ENCODE measurements at regions of chr11 and their contacts with region 1.

Region 1: DNA sequence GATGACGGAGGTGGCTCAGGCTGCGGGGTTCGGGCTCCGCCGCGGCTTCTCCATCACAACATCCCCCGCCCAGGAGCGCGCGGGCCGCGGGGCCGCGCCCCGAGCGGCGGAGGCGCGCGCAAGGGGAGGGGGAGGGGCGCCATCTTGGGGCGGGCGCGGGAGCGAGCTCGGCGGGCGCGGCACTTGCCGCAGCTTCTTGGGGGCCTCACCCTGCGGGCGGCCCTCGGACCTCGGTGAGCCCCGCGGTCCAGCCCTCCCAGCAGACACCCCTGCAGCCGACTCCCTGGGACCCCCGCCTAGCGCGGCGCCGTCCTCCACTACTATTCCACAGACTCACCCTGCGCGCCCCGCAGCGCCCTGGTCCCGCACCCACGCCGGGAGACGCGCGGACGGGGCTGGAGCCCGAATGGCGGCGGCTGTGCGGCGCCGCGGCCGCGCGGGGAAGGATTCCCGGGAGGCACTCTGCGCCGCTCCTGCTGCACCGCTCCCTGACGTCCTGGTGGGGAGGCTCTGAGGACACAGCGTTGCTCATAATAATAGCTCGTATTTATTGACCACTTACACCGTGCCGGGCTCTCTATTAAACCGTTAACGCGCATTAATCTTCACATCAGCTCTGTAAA is at the start of gene APBB1:
- DNase-seq: peak in 1 of 2 donors; percentile 83
- H3K4me3 ChIP-seq: peak within 1 kb of the TSS; percentile 91 to 99
- H3K27ac ChIP-seq: peak within 1 kb of the TSS; percentile 90 to 92
- H3K4me1 ChIP-seq: peaks cover 0 to 22% of the 10 kb centered on the region in 2 donors
- H3K27me3 ChIP-seq: no peaks in the 10 kb centered on the region
- CTCF ChIP-seq: peak in 1 of 3 experiments; percentile 16
- total RNA-seq, gene APBB1: 29.2 TPM

Region 2: GRCh38 chr11:5043380-5043779 is 1375.7 kb before region 1 on chr11:
- intact Hi-C with region 1: no loop called
- DNase-seq: no peak
- H3K4me3 ChIP-seq: no peak overlapping the region
- H3K27ac ChIP-seq: no peak overlapping the region
- H3K4me1 ChIP-seq: no peaks in the 10 kb centered on the region
- H3K27me3 ChIP-seq: no peaks in the 10 kb centered on the region
- CTCF ChIP-seq: no peak

Region 3: GRCh38 chr11:6362873-6363678 is 56.0 kb before region 1 on chr11:
- intact Hi-C with region 1: no loop called
- DNase-seq: peak; percentile 47 to 93
- H3K4me3 ChIP-seq: peak overlapping the region in 1 of 2 donors; percentile 7
- H3K27ac ChIP-seq: peak overlapping the region; percentile 88 to 92
- H3K4me1 ChIP-seq: peaks cover 9 to 18% of the 10 kb centered on the region in 2 donors
- H3K27me3 ChIP-seq: no peaks in the 10 kb centered on the region
- CTCF ChIP-seq: peak; percentile 80 to 93 (median 87)

Region 4: DNA sequence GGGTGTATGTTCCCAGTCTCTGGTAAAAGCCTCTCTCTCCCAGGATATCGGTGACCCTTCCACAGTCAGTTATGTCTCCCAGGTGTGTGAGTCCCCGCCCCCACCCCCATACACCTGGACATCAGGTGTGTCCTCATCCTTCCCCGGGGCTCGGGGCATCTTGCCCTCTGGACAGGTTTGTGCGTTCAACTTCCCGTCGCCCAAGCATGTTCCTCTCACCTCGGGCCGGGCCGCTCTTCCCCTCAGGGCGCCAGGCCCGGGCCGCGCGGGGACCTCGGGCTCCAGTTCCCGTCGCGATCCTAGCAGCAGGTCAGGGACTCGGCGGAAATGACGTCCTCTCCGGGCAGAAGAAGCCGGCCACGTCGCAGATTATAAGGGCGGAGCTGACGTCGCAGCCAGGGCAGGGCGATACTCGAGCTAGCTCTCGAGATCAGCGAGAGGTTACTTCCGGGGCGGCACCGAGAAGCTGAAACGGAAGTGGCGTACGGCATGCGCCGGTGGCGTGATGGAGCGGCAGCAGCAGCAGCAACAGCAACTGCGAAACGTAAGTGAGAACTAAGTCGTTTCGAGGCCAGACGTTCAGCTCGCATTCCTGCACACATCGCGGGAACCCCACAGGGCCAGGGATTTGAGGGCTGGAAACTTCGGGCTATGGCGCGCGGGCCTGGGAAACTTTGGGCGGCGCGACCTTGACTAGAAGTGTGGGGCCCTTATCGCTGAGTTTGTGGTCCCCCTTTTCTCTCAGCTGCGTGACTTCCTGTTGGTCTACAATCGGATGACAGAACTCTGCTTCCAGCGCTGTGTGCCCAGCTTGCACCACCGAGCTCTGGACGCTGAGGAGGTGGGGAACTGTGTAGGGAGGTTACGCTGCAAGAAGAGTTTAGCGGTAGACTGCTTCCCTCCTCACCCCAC is 62.1 kb after region 1 on chr11 and contains the starts of genes ARFIP2 and TIMM10B:
- intact Hi-C with region 1: loop called (anchors 2 kb)
- DNase-seq: peak; percentile 96 to 99
- H3K4me3 ChIP-seq: peak within 1 kb of the TSS; percentile 92 to 94
- H3K27ac ChIP-seq: peak within 1 kb of the TSS; percentile 95
- H3K4me1 ChIP-seq: peaks cover 7 to 27% of the 10 kb centered on the region in 2 donors
- H3K27me3 ChIP-seq: no peaks in the 10 kb centered on the region
- CTCF ChIP-seq: no peak
- total RNA-seq, gene ARFIP2: 87.8 TPM
- total RNA-seq, gene TIMM10B: 19.2 TPM

Region 5: DNA sequence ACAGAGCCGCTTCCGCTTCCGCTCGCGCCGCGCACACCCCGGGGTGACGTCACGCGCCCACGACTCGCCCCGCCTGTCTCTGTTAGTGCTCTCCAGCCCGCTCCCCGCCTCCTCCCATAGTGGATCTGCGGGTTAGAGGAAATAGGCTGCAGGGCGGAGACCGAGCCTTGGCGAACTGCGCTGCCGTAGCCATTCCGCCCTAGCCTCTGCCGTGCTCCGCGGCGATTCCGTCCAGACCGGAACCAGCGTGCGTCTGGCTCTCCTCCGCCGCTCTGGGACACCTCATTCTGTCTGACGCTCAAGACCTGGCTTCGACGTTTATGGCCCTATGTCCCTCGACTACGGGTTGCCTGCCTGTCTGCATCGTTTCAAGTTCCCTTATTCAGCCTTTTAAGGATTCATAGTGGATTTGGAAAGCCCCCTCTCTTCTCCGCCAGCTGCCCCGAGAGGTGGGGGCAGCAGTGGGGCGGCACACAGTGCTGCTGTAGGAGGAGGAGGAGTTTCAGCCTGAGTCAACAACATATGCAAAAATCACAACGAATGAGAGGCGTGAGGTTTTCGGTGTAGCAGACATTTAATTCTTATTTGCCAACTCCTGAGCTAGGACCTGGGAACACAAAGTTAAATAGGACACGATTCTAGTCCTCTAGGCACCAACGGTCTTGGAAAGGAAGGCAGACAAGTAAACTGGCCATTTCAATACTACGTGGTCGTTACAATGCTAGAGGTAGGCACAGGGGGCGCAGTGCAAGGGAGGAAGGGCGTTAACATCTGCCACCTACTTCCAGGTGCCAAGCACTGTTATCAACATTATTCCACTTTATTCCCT is 193.3 kb after region 1 on chr11 and contains the start of gene TAF10:
- intact Hi-C with region 1: no loop called
- DNase-seq: peak; percentile 95 to 99
- H3K4me3 ChIP-seq: peak within 1 kb of the TSS; percentile 76 to 95
- H3K27ac ChIP-seq: peak within 1 kb of the TSS; percentile 95 to 97
- H3K4me1 ChIP-seq: peaks cover 18 to 37% of the 10 kb centered on the region in 2 donors
- H3K27me3 ChIP-seq: no peaks in the 10 kb centered on the region
- CTCF ChIP-seq: peak in 2 of 3 experiments; percentile 43 to 47
- total RNA-seq, gene TAF10: 76.0 TPM